ENCODE measurements at regions of chr1 and their contacts with region 1.

Region 1: GRCh38 chr1:42173155-42173933 is 8.8 kb upstream of the GUCA2A start:
- DNase-seq: no peak
- ATAC-seq: peak; percentile 82
- H3K4me3 ChIP-seq: no peak overlapping the region
- H3K27ac ChIP-seq: no peak overlapping the region
- H3K4me1 ChIP-seq: peaks cover 4 to 14% of the 10 kb centered on the region in 2 experiments
- H3K27me3 ChIP-seq: no peaks in the 10 kb centered on the region
- CTCF ChIP-seq: peak; percentile 70 to 98 (median 93); a peak in 5 of 6 replicates
- POLR2A ChIP-seq: no peak
- RAD21 ChIP-seq: peak; percentile 82

Region 2: GRCh38 chr1:41268154-41268770 is 905.1 kb before region 1 on chr1:
- CTCF ChIA-PET with region 1: no interaction called
- POLR2A ChIA-PET with region 1: no interaction called
- RAD21 ChIA-PET with region 1: no interaction called
- intact Hi-C with region 1: loop called (anchors 10 kb)
- DNase-seq: peak; percentile 50
- ATAC-seq: peak; percentile 96
- H3K4me3 ChIP-seq: no peak overlapping the region
- H3K27ac ChIP-seq: no peak overlapping the region
- H3K4me1 ChIP-seq: peaks cover 0 to 2% of the 10 kb centered on the region in 2 experiments; a peak in 1 of 4 replicates
- H3K27me3 ChIP-seq: no peaks in the 10 kb centered on the region
- CTCF ChIP-seq: peak; percentile 89 to 96 (median 93)
- POLR2A ChIP-seq: no peak
- RAD21 ChIP-seq: peak; percentile 96

Region 3: DNA sequence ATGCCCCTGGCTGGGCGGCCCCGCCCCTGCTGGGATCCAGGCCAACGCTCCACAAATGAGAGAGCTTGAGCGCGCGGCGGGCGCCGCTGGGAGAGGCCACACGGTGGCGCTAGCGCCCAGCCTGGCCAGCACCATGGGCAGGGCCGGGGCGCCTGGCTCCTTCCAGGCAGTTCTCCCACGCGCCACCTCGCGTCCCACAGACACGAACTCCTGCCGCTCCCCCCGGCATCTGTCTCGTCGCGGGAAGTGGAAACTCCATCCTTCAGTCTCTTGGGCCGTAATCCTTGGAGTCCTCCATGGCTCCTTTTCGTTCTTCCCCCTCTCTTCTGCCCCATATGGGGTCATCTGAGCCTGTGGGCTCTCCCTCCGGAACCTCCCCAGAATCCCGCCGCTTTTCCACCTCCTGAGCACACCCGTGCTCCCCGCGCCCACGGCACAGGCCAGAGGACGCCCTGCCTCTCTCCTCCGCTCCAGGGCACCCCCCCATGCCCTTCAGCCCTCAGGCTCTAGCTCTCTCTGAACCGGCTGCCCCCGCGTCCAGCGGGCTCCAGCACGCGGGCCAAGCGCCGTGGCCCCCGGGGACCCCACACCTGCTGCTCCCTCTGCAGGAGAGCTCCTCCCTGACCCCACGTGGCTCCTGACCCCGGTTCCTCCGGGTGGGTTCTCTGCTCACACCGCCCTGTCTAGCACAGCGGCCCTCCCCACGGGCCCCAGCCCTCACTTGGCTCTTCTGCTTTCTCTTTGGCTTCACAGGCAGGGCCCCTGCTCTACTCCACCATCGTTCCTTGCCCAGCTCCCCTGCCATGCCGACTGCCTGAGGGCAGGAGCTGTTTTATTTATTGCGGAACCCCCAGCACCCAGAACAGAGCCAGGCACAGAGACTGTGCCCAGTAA is 656.9 kb before region 1 on chr1:
- CTCF ChIA-PET with region 1: interaction called, 10 read pairs
- POLR2A ChIA-PET with region 1: no interaction called
- RAD21 ChIA-PET with region 1: no interaction called
- intact Hi-C with region 1: no loop called
- DNase-seq: peak; percentile 67
- ATAC-seq: peak; percentile 97
- H3K4me3 ChIP-seq: no peak overlapping the region
- H3K27ac ChIP-seq: no peak overlapping the region
- H3K4me1 ChIP-seq: peaks cover 27 to 34% of the 10 kb centered on the region in 2 experiments
- H3K27me3 ChIP-seq: no peaks in the 10 kb centered on the region
- CTCF ChIP-seq: peak; percentile 80 to 94 (median 90)
- POLR2A ChIP-seq: no peak
- RAD21 ChIP-seq: peak; percentile 88

Region 4: DNA sequence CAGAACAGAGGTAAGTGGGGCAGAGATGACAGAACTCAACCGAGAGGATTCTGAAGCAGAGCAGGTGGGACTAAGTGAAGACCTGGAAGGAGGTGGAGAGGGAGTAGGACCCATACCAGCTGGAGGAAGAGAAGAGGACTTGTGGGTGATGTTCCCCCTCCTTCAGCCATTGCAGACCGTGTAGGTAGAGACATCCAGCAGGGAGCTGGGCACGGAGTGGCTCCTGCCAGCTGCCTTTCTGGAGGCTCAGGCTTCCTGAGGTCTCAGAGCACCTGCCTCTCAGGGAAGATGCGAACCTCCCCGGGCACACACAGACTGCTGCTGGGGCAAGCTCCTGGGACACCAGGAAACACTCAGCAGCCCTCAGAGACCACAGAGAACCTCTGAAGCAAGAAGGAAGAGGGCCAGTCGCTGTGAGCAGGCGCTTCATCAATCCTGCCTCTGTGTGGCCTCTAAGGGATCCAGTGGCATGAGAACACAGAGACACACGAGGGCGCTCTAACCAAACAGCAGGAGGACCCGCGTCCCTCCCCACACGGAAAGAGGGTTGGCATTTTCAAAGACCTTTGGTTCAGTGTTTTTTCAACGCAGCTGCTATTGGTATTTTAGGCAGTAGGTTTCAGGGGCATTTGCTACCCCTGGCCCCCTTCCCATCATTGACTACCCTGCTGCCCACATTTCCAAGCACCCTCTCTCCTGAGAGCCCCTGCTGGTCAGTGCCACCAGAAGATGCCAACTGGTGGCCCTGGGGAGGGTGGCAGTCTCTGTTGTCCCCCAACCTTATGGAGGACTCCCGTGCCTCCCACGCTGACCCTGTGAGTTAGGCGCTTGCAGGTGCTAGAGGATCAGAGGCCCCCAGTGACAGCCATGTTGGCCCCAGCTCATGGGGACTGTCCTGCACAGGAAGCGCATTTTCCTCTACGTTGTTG is 599.3 kb before region 1 on chr1:
- CTCF ChIA-PET with region 1: interaction called, 4 read pairs
- POLR2A ChIA-PET with region 1: no interaction called
- RAD21 ChIA-PET with region 1: no interaction called
- intact Hi-C with region 1: loop called (anchors 1 kb)
- DNase-seq: peak; percentile 54
- ATAC-seq: peak; percentile 97
- H3K4me3 ChIP-seq: no peak overlapping the region
- H3K27ac ChIP-seq: no peak overlapping the region
- H3K4me1 ChIP-seq: peaks cover 0 to 4% of the 10 kb centered on the region in 2 experiments; a peak in 1 of 4 replicates
- H3K27me3 ChIP-seq: no peaks in the 10 kb centered on the region
- CTCF ChIP-seq: peak; percentile 90 to 96 (median 94)
- POLR2A ChIP-seq: no peak
- RAD21 ChIP-seq: peak; percentile 99

Region 5: DNA sequence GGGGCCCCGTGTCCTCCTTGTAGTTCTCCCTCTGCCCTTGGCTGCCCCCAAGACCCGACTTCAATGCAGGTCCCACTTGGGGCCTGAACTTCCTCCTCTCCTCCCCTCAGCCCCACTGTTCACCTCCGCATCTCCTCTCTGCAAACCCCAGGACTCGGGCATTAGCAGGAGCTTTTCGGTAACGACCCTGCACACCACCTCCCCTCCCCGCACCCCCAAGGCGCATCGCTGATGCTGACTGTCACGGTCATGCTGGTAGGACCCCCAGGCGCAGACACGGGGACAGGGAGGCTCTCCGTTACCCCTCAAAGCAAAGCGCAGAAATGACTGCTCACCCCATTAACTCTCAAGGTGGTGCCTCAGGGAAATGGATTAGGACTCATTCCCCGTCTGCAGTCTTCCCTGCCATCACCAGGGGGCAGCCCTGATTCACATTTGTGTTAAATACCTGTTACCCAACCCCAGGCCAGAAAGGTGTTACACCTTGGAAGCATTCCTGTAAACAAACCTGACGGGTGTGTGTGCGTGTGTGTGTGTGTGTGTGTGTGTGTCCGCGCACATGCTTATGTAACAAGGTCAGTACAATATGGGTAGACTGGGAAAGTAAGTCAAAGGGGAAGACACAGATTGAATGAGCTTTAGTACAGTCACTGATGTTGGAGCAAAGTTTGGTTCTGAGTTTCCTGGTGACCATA is 26.6 kb before region 1 on chr1:
- CTCF ChIA-PET with region 1: interaction called, 21 read pairs
- POLR2A ChIA-PET with region 1: no interaction called
- RAD21 ChIA-PET with region 1: no interaction called
- intact Hi-C with region 1: loop called (anchors 1 kb)
- DNase-seq: peak; percentile 79
- ATAC-seq: peak; percentile 94
- H3K4me3 ChIP-seq: no peak overlapping the region
- H3K27ac ChIP-seq: no peak overlapping the region
- H3K4me1 ChIP-seq: peaks cover 0 to 8% of the 10 kb centered on the region in 2 experiments; a peak in 1 of 4 replicates
- H3K27me3 ChIP-seq: no peaks in the 10 kb centered on the region
- CTCF ChIP-seq: peak; percentile 83 to 89 (median 83)
- POLR2A ChIP-seq: no peak
- RAD21 ChIP-seq: peak; percentile 95

Region 6: DNA sequence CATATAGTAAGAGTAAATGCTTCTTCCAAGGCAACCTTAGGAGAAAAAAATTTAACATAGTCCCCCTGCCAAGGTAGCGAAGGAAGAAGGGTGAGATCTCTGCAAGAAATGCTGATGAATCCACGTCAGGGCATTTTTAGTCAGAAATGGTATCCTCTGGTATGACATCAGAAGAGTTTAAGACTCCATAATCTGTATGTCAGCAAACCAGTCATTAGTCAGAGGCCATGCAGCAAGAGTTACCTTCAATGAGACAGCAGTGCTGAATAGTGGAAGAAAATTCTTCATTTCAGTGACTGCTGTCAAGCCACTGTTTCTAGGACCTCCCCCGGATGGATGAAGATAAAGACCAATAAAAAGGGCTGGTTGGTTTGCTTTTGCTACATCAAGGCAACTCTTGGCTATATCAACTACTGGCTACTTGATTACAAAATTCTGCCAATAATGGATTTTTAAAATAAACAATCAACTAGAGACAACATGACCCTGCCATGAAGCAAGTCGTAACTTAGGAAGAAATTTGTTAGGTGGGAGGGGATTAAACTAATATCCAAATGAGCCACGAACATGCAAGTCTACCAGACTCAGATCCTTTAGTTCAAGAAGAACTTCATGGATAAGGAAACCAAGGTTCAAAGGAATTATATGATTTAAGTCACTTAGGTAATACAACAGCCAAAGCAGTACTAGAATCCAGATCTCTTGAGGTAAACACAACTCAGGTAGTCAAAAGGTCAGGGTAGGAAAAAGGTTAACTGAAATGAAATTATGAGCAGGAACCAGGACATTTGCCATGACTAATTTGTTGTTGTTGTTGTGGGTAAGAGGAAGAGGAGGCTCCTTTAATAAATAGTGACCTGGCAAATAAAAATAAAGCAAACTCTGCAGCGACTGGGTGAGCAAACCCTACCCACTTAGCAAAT is 16.8 kb after region 1 on chr1:
- CTCF ChIA-PET with region 1: interaction called, 13 read pairs
- POLR2A ChIA-PET with region 1: no interaction called
- RAD21 ChIA-PET with region 1: no interaction called
- intact Hi-C with region 1: no loop called
- DNase-seq: no peak
- ATAC-seq: no peak
- H3K4me3 ChIP-seq: no peak overlapping the region
- H3K27ac ChIP-seq: no peak overlapping the region
- H3K4me1 ChIP-seq: no peaks in the 10 kb centered on the region
- H3K27me3 ChIP-seq: no peaks in the 10 kb centered on the region
- CTCF ChIP-seq: no peak
- POLR2A ChIP-seq: no peak
- RAD21 ChIP-seq: no peak

Region 7: GRCh38 chr1:42551180-42551579 is 377.8 kb after region 1 on chr1:
- CTCF ChIA-PET with region 1: no interaction called
- POLR2A ChIA-PET with region 1: no interaction called
- RAD21 ChIA-PET with region 1: no interaction called
- intact Hi-C with region 1: no loop called
- DNase-seq: no peak
- ATAC-seq: no peak
- H3K4me3 ChIP-seq: no peak overlapping the region
- H3K27ac ChIP-seq: no peak overlapping the region
- H3K4me1 ChIP-seq: no peaks in the 10 kb centered on the region
- H3K27me3 ChIP-seq: no peaks in the 10 kb centered on the region
- CTCF ChIP-seq: no peak
- POLR2A ChIP-seq: no peak
- RAD21 ChIP-seq: no peak

Region 8: DNA sequence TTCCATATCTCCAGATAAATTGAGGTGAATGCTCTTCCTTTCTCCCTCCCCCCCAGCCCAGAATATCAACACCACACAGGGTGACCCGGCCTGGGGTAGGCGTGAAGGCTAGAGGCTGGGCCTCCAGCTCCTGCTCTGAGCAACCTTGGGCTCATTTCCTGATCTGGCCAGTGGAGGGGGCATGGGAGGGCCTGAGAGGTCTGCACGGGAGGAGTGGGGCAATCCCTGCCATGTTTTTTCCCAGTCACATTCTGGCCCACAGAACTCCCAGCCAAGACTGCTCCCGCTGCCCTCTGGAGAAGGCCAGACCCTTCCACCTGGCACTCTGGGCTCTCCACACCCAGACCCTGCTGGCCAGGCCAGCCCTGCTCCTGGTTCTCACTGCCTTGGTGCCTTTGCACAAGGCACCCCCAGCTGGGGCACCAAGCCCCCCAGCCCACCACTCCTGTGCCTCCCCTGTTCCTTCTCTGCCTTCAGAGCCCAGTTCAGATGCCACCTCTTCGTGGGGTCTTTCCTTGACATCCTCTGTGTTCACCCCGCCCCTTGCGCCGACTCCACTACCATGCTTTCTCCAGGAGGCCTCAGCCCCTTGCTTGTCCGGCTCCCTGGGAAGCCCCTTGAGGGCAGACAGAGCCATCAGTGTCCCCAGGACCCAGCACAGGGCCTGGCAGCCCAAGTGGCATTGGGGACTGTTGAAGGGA is 563.0 kb after region 1 on chr1:
- CTCF ChIA-PET with region 1: interaction called, 3 read pairs
- POLR2A ChIA-PET with region 1: no interaction called
- RAD21 ChIA-PET with region 1: no interaction called
- intact Hi-C with region 1: loop called (anchors 10 kb)
- DNase-seq: no peak
- ATAC-seq: peak; percentile 88
- H3K4me3 ChIP-seq: no peak overlapping the region
- H3K27ac ChIP-seq: no peak overlapping the region; the same call in 1 of the 2 replicates
- H3K4me1 ChIP-seq: peaks cover 0 to 6% of the 10 kb centered on the region in 2 experiments; a peak in 3 of 4 replicates
- H3K27me3 ChIP-seq: no peaks in the 10 kb centered on the region
- CTCF ChIP-seq: peak in 2 of 3 experiments; percentile 44 to 64; a peak in 4 of 6 replicates
- POLR2A ChIP-seq: no peak
- RAD21 ChIP-seq: no peak